Common myeloid progenitor, CD34-positive (primary cell): ENCODE measurements at regions of chr1 and their contacts with region 1.

Region 1: GRCh38 chr1:89799495-89799894 is 21.3 kb upstream of the LRRC8D start:
- DNase-seq: peak; percentile 71 to 94 (median 93)
- H3K4me3 ChIP-seq: peak overlapping the region in 2 of 7 experiments; percentile 5 to 54
- H3K27ac ChIP-seq: no peak overlapping the region
- H3K4me1 ChIP-seq: peaks cover 2 to 34% (median 23%) of the 10 kb centered on the region in 4 experiments
- H3K27me3 ChIP-seq: no peaks in the 10 kb centered on the region

Region 2: DNA sequence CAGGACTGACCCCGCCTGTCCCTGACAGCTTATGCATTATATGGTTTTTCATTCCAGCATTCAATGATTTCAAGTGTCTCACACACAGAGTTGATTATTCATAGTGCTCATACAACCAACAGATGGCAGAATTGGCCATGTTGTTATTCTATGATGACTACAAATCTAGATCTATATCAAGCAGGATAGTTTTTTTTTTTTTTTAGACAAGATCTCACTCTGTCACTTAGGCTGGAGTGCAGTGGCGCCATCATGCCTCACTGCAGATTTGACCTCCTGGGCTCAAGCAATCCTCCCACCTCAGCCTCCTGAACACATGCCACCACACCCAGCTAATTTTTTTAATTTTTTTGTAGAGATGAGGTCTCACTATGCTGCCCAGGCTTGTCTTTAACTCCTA is 18.8 kb before region 1 on chr1:
- CTCF ChIA-PET with region 1: interaction called, 16 read pairs
- POLR2A ChIA-PET with region 1: no interaction called
- DNase-seq: peak; percentile 68 to 83 (median 83)
- H3K4me3 ChIP-seq: no peak overlapping the region
- H3K27ac ChIP-seq: no peak overlapping the region
- H3K4me1 ChIP-seq: peaks cover 0 to 10% (median 5%) of the 10 kb centered on the region in 4 experiments
- H3K27me3 ChIP-seq: no peaks in the 10 kb centered on the region

Region 3: GRCh38 chr1:89820422-89821321 is 21.2 kb after region 1 on chr1 and contains the start of gene LRRC8D:
- CTCF ChIA-PET with region 1: interaction called, 11 read pairs
- POLR2A ChIA-PET with region 1: interaction called, 5 read pairs
- DNase-seq: peak; percentile 74 to 89 (median 83)
- H3K4me3 ChIP-seq: peak within 1 kb of the TSS; percentile 48 to 86 (median 78)
- H3K27ac ChIP-seq: peak within 1 kb of the TSS; percentile 28 to 89
- H3K4me1 ChIP-seq: peaks cover 26 to 50% (median 37%) of the 10 kb centered on the region in 4 experiments
- H3K27me3 ChIP-seq: no peaks in the 10 kb centered on the region